Psoas muscle (tissue), 8 donors: ENCODE measurements at regions of chrX and their contacts with region 1.

Region 1: GRCh38 chrX:31658360-31658759 is 586.5 kb upstream of the FTHL17 start:
- DNase-seq: no peak
- ATAC-seq: no peak
- H3K4me3 ChIP-seq: no peak overlapping the region
- H3K27ac ChIP-seq: no peak overlapping the region
- H3K4me1 ChIP-seq: no peaks in the 10 kb centered on the region
- H3K27me3 ChIP-seq: no peaks in the 10 kb centered on the region
- CTCF ChIP-seq: peak; percentile 58

Region 2: GRCh38 chrX:31036895-31037294 is 621.5 kb before region 1 on chrX:
- intact Hi-C with region 1: loop called (anchors 5 to 10 kb)
- DNase-seq: peak in 1 of 2 donors; percentile 19
- ATAC-seq: peak in 3 of 4 donors; percentile 60 to 70 (median 62)
- H3K4me3 ChIP-seq: no peak overlapping the region
- H3K27ac ChIP-seq: no peak overlapping the region
- H3K4me1 ChIP-seq: no peaks in the 10 kb centered on the region
- H3K27me3 ChIP-seq: peaks cover 0 to 20% (median 0%) of the 10 kb centered on the region in 3 donors
- CTCF ChIP-seq: peak; percentile 54

Region 3: DNA sequence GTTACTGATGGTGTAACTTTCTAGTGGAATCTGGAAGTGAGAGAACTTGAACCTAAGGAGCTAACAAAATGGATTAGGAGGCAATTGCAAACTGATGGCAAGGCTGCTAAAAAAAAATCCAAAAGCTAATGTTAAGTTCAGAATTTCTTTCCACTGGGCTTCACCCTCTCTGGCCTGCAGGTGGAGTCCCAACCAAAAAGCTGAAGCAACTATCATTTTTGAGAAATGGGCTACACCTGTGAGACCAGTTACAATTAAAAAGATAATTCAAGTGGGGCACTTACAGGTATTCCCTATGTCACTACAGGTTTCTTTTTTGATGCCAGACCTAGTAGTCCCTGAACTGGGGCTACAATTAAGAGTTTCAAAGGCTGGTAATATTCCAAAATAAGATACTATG is 444.4 kb before region 1 on chrX:
- intact Hi-C with region 1: loop called (anchors 5 to 10 kb)
- DNase-seq: no peak
- ATAC-seq: no peak
- H3K4me3 ChIP-seq: no peak overlapping the region
- H3K27ac ChIP-seq: no peak overlapping the region
- H3K4me1 ChIP-seq: no peaks in the 10 kb centered on the region
- H3K27me3 ChIP-seq: peaks cover 0 to under 1% (median 0%) of the 10 kb centered on the region in 3 donors
- CTCF ChIP-seq: peak; percentile 30

Region 4: GRCh38 chrX:31266172-31267076 is 391.9 kb before region 1 on chrX:
- intact Hi-C with region 1: loop called in 1 of 2 experiments (anchors 10 kb)
- DNase-seq: peak; percentile 38 to 57
- ATAC-seq: peak; percentile 48 to 78 (median 68)
- H3K4me3 ChIP-seq: peak overlapping the region; percentile 65
- H3K27ac ChIP-seq: no peak overlapping the region
- H3K4me1 ChIP-seq: no peaks in the 10 kb centered on the region
- H3K27me3 ChIP-seq: peaks cover 0 to 3% (median 0%) of the 10 kb centered on the region in 3 donors
- CTCF ChIP-seq: no peak

Region 5: GRCh38 chrX:31572360-31572759 is 86.0 kb before region 1 on chrX:
- intact Hi-C with region 1: no loop called
- DNase-seq: no peak
- ATAC-seq: no peak
- H3K4me3 ChIP-seq: no peak overlapping the region
- H3K27ac ChIP-seq: no peak overlapping the region
- H3K4me1 ChIP-seq: no peaks in the 10 kb centered on the region
- H3K27me3 ChIP-seq: no peaks in the 10 kb centered on the region
- CTCF ChIP-seq: no peak